ENCODE measurements at regions of chr1 and their contacts with region 1.

Region 1: DNA sequence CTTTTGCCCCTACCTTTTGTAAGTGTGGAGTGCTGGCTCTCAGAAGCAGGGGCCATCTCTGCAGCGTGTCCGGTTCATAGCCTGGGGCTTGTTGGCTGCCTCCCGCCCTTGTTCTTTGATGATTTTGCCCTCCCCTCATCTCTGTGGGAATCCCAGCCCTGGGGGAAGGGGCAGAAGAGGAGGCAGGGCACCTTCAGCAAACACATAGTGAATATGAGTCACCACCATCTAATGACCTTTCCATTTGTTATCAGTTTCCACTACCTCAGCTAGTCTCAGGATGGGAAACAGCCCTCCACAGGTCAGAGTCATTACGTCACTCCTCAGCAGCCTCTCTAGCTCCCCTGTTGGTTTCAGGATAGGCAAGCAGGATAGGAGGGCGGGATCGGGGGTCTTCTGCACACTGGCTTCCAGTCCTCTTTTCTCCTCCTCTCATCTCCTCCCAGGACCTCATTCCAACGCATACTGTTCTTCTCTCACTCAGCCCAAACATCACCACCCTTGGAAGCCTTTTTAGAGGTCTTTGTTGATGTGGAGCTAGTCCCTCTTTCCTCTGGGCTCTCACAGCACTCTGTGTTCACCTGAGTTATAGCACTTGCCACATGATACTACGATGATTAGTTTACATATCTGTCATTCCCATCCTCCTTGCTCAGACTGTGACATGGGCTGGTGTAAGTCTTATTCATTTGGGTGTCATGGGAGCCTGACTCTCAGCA is 15.8 kb downstream of the GADD45A start:
- DNase-seq: peak; percentile 79 to 93 (median 86)
- ATAC-seq: peak; percentile 94
- H3K4me3 ChIP-seq: no peak overlapping the region
- H3K27ac ChIP-seq: peak overlapping the region; percentile 77
- H3K4me1 ChIP-seq: peaks cover 15 to 30% of the 10 kb centered on the region in 2 experiments
- H3K27me3 ChIP-seq: no peaks in the 10 kb centered on the region
- CTCF ChIP-seq: peak; percentile 65 to 69 (median 65)
- EP300 ChIP-seq: peak; percentile 82
- POLR2A ChIP-seq: no peak
- RAD21 ChIP-seq: peak in 1 of 2 experiments; percentile 36; a peak in 2 of 4 replicates

Region 2: GRCh38 chr1:67735806-67736627 is 35.2 kb after region 1 on chr1:
- CTCF ChIA-PET with region 1: no interaction called
- POLR2A ChIA-PET with region 1: no interaction called
- in situ Hi-C with region 1: loop called (anchors 5 kb)
- intact Hi-C with region 1: no loop called
- DNase-seq: peak in 3 of 4 experiments; percentile 56 to 70 (median 66)
- ATAC-seq: no peak
- H3K4me3 ChIP-seq: no peak overlapping the region
- H3K27ac ChIP-seq: peak overlapping the region; percentile 72
- H3K4me1 ChIP-seq: peaks cover 43 to 72% of the 10 kb centered on the region in 2 experiments
- H3K27me3 ChIP-seq: no peaks in the 10 kb centered on the region
- CTCF ChIP-seq: no peak
- EP300 ChIP-seq: peak; percentile 4; the same call in 1 of the 2 replicates
- POLR2A ChIP-seq: no peak
- RAD21 ChIP-seq: no peak